ENCODE measurements at regions of chr11 and their contacts with region 1.

Region 1: GRCh38 chr11:119782006-119782738 is 53.2 kb upstream of the NECTIN1 start:
- DNase-seq: no peak
- H3K4me3 ChIP-seq: no peak overlapping the region
- H3K27ac ChIP-seq: peak overlapping the region in 1 of 2 experiments; percentile 77; a peak in 2 of 4 replicates
- H3K4me1 ChIP-seq: peaks cover 0 to 64% of the 10 kb centered on the region in 2 experiments; a peak in 2 of 4 replicates
- H3K27me3 ChIP-seq: no peaks in the 10 kb centered on the region; the same call in none of the 2 replicates
- CTCF ChIP-seq: no peak
- EP300 ChIP-seq: no peak
- RAD21 ChIP-seq: no peak

Region 2: GRCh38 chr11:119764108-119764868 is 17.9 kb before region 1 on chr11:
- CTCF ChIA-PET with region 1: interaction called, 5 read pairs
- POLR2A ChIA-PET with region 1: interaction called, 13 read pairs
- DNase-seq: no peak
- H3K4me3 ChIP-seq: no peak overlapping the region
- H3K27ac ChIP-seq: peak overlapping the region in 1 of 2 experiments; percentile 17; a peak in 2 of 4 replicates
- H3K4me1 ChIP-seq: peaks cover 0 to 20% of the 10 kb centered on the region in 2 experiments; a peak in 1 of 4 replicates
- H3K27me3 ChIP-seq: no peaks in the 10 kb centered on the region; the same call in 1 of the 2 replicates
- CTCF ChIP-seq: no peak
- EP300 ChIP-seq: no peak
- RAD21 ChIP-seq: no peak

Region 3: GRCh38 chr11:119874660-119875238 is 92.6 kb after region 1 on chr11:
- CTCF ChIA-PET with region 1: interaction called, 7 read pairs
- POLR2A ChIA-PET with region 1: interaction called, 29 read pairs
- DNase-seq: peak; percentile 64
- H3K4me3 ChIP-seq: no peak overlapping the region
- H3K27ac ChIP-seq: peak overlapping the region in 1 of 2 experiments; percentile 97; a peak in 2 of 4 replicates
- H3K4me1 ChIP-seq: peaks cover 0 to 70% of the 10 kb centered on the region in 2 experiments; a peak in 2 of 4 replicates
- H3K27me3 ChIP-seq: peaks cover 12% of the 10 kb centered on the region; the same call in 1 of the 2 replicates
- CTCF ChIP-seq: no peak
- EP300 ChIP-seq: peak in 1 of 2 experiments; percentile 69; a peak in 1 of 4 replicates
- RAD21 ChIP-seq: peak; percentile 2; the same call in 1 of the 2 replicates

Region 4: DNA sequence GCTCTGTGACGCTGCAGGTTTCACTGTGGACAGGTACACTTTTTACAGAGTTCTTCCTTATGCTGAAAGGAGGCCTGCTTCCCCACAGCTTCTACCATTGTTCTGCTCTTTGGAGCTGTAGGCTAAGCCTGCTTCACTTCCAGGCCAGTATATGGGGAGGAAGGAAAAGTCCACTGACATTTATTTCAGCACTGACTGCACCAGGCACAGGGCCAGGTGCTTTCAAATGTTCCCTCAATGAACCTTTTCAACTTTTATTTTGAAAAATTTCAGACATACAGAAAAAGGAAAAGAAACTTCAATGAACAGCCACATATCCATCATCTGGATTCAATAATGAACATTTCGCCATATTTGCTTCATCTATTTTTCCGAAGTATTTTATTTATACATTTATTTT is 479.8 kb after region 1 on chr11:
- CTCF ChIA-PET with region 1: no interaction called
- POLR2A ChIA-PET with region 1: no interaction called
- DNase-seq: no peak
- H3K4me3 ChIP-seq: no peak overlapping the region
- H3K27ac ChIP-seq: no peak overlapping the region
- H3K4me1 ChIP-seq: no peaks in the 10 kb centered on the region
- H3K27me3 ChIP-seq: peaks cover 30% of the 10 kb centered on the region; the same call in 1 of the 2 replicates
- CTCF ChIP-seq: no peak
- EP300 ChIP-seq: no peak
- RAD21 ChIP-seq: no peak

Region 5: GRCh38 chr11:120281143-120281795 is 499.1 kb after region 1 on chr11:
- CTCF ChIA-PET with region 1: no interaction called
- POLR2A ChIA-PET with region 1: no interaction called
- DNase-seq: no peak
- H3K4me3 ChIP-seq: no peak overlapping the region
- H3K27ac ChIP-seq: 0 out of 4 replicates have a peak overlapping the region, but pooled peaks of 1 of the 2 experiments have one; percentile 14
- H3K4me1 ChIP-seq: peaks cover 0 to 39% of the 10 kb centered on the region in 2 experiments; a peak in 2 of 4 replicates
- H3K27me3 ChIP-seq: no peaks in the 10 kb centered on the region
- CTCF ChIP-seq: no peak
- EP300 ChIP-seq: no peak
- RAD21 ChIP-seq: no peak

Measured in SK-N-SH (cell line).